MCF 10A (cell line): ENCODE measurements at regions of chr5 and their contacts with region 1.

Region 1: GRCh38 chr5:43556857-43557542 is at the start of gene PAIP1:
- DNase-seq: peak; percentile 87
- H3K4me3 Mint-ChIP-seq: no peak within 1 kb of the TSS
- H3K27ac Mint-ChIP-seq: peak within 1 kb of the TSS; percentile 84
- H3K4me1 Mint-ChIP-seq: peaks cover 6% of the 10 kb centered on the region
- H3K27me3 Mint-ChIP-seq: no peaks in the 10 kb centered on the region
- CTCF ChIP-seq: peak; percentile 57
- total RNA-seq, gene PAIP1: 105 and 116 TPM in 2 replicates

Region 2: GRCh38 chr5:43514816-43515677 is 42.0 kb before region 1 on chr5 and contains the start of gene C5orf34:
- CTCF ChIA-PET with region 1: no interaction called
- POLR2A ChIA-PET with region 1: interaction called, 27 read pairs
- intact Hi-C with region 1: loop called (anchors 1 kb)
- DNase-seq: peak; percentile 97
- H3K4me3 Mint-ChIP-seq: peak within 1 kb of the TSS; percentile 80
- H3K27ac Mint-ChIP-seq: peak within 1 kb of the TSS; percentile 90
- H3K4me1 Mint-ChIP-seq: peaks cover 21% of the 10 kb centered on the region
- H3K27me3 Mint-ChIP-seq: no peaks in the 10 kb centered on the region
- CTCF ChIP-seq: no peak
- total RNA-seq, gene C5orf34: 3.9 and 5.9 TPM in 2 replicates

Region 3: GRCh38 chr5:43543434-43543833 is 13.6 kb before region 1 on chr5:
- CTCF ChIA-PET with region 1: interaction called, 4 read pairs
- POLR2A ChIA-PET with region 1: interaction called, 10 read pairs
- intact Hi-C with region 1: no loop called
- DNase-seq: peak; percentile 8
- H3K4me3 Mint-ChIP-seq: no peak overlapping the region
- H3K27ac Mint-ChIP-seq: no peak overlapping the region
- H3K4me1 Mint-ChIP-seq: peaks cover 7% of the 10 kb centered on the region
- H3K27me3 Mint-ChIP-seq: no peaks in the 10 kb centered on the region
- CTCF ChIP-seq: no peak

Region 4: DNA sequence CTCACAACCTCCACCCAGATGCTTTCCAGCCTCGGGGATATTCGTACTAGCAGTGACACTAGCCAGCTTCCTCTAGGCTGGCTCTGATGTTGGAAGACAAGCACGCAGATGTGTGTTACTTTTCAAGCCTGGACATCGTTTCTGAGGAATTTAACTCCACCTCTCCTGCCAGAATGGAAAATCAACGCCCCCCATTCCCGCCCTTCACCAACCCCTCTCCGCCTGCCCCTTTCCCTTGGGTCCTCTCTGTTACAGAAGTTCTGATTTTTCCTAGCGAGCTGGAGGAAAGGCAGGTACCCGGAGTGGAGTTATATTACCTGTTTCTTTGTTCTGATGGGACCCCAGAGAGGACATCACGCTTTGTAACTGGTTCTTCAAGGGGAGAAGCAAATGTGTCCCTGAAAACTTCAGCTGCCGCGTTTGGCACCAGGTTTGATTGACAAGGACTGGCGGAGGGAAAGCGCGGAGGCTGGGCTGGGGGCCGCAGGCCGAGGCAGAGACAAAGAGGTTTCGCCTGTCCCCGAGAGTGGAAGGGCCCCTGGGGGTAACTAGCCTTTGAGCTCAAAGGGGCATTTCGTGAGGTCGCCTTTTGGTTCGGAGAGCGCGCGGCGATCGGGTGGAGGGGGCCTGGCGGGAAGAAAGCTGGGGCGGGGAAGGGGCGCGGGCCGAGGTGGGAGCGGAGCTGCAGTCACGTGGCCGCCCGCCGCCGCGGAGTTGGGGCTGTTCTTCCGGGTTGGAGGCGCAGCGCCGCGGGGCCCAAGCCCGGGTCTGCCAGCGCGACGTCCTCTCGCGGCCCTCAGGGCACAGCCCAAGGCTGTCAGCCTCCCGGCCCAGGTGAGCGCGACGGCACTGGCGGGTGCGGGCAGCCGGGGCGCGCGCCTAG is 45.7 kb after region 1 on chr5 and contains the start of gene NNT:
- CTCF ChIA-PET with region 1: interaction called, 16 read pairs
- POLR2A ChIA-PET with region 1: interaction called, 67 read pairs
- intact Hi-C with region 1: loop called (anchors 2 kb)
- DNase-seq: peak; percentile 60
- H3K4me3 Mint-ChIP-seq: peak within 1 kb of the TSS; percentile 83
- H3K27ac Mint-ChIP-seq: peak within 1 kb of the TSS; percentile 99
- H3K4me1 Mint-ChIP-seq: peaks cover 11% of the 10 kb centered on the region
- H3K27me3 Mint-ChIP-seq: no peaks in the 10 kb centered on the region
- CTCF ChIP-seq: no peak
- total RNA-seq, gene NNT: 38.4 and 52.3 TPM in 2 replicates